Heart left ventricle (tissue), 16 donors: ENCODE measurements at regions of chr1 and their contacts with region 1.

Region 1: DNA sequence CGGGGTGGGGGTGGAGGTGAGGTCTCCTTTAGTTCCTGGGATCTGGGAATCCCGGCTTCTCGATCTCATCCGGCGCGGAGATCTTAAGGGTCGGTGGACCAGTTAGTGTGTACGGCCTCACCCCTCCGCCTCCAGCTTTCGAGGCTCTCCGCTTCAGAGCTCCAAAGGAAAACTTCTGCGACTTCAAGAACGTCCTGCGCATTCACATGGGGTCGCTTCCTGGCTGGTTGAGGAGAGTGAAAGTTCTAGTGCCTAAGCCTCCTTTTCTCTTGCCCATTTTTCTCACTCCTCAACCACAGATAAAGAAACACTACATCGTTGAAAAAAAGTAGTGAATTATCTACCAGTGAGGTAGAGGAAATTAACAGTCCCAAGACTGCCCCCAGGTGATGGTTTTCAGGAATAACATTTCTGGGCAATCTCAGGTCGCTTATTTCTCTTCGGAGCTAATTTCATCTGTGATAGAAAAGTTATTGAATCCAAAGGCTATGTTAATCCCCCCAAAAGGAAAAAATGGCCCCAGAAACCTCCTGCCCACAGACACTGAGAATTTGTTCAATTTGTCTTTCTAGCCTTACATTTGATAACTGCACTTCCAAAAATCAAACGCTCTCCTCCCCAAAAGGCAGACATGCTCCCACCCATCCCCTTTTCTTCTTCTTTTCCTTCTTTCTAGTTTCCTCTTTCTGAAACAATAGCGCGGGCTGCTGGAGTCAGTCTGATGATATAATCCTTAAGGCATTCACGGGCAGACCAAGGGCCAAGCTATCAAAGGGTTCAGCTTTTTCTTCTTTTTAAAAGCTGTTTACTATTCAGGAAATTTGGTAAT is 20.6 kb upstream of the TBX15 start:
- DNase-seq: no peak
- ATAC-seq: peak in 3 of 4 donors; percentile 44 to 85 (median 73)
- H3K4me3 ChIP-seq: peak overlapping the region; percentile 8 to 46 (median 32)
- H3K27ac ChIP-seq: no peak overlapping the region
- H3K4me1 ChIP-seq: peaks cover 0 to 32% (median 17%) of the 10 kb centered on the region in 12 donors
- H3K27me3 ChIP-seq: peaks cover 30 to 68% (median 53%) of the 10 kb centered on the region in 9 donors
- CTCF ChIP-seq: peak; percentile 48 to 73 (median 60)
- POLR2A ChIP-seq: no peak

Region 2: DNA sequence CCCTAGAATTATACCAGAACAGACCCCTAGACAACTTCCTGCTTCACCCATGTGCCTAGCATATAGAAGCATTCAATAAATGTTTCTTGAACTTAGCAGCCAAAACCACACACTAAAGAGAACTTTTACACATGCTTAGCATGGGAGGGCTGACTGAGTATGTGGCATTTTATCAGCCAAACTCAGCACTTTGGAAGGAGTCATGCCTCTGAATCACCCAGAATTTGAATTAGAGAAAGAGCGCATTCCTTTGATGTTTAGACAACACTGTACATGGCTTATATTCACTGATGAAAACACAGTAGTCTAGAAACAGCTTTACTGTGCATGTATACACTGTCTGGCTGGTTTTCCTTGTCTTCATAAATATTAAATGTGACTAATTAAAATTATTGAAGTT is 849.8 kb before region 1 on chr1:
- intact Hi-C with region 1: loop called in 8 of 10 experiments (anchors 5 to 10 kb)
- DNase-seq: no peak
- ATAC-seq: peak in 1 of 4 donors; percentile 29
- H3K4me3 ChIP-seq: no peak overlapping the region
- H3K27ac ChIP-seq: no peak overlapping the region
- H3K4me1 ChIP-seq: no peaks in the 10 kb centered on the region
- H3K27me3 ChIP-seq: peaks cover 0 to 3% (median 0%) of the 10 kb centered on the region in 9 donors
- CTCF ChIP-seq: no peak
- POLR2A ChIP-seq: no peak

Region 3: DNA sequence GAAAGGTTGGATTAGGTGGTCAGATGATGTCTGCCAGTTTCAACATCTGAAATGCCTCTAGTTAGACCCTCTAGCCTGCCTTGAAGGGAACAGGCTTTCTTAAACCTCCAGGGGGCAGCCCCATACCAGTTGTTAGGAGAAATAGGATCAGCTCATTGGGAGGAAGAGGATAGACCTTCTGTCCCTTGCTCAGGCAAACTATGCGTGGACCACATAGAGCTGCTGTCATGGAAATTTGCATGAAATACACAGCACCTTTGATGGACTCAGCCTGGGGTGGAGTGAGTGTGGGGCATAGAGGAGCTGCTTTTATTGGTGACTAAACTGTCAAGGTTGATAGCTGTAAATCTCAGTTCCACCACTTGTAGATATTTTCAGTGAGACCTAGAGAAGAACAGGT is 785.3 kb before region 1 on chr1:
- intact Hi-C with region 1: loop called in 8 of 10 experiments (anchors 2 to 10 kb)
- DNase-seq: peak in 1 of 5 donors; percentile 20
- ATAC-seq: peak in 2 of 4 donors; percentile 54 to 67
- H3K4me3 ChIP-seq: no peak overlapping the region
- H3K27ac ChIP-seq: no peak overlapping the region
- H3K4me1 ChIP-seq: no peaks in the 10 kb centered on the region
- H3K27me3 ChIP-seq: no peaks in the 10 kb centered on the region
- CTCF ChIP-seq: peak in 9 of 12 donors; percentile 28 to 52 (median 42)
- POLR2A ChIP-seq: no peak

Region 4: GRCh38 chr1:118304722-118305359 is 703.9 kb before region 1 on chr1:
- intact Hi-C with region 1: loop called in 2 of 10 experiments (anchors 10 kb)
- DNase-seq: no peak
- ATAC-seq: peak in 3 of 4 donors; percentile 45 to 66 (median 64)
- H3K4me3 ChIP-seq: no peak overlapping the region
- H3K27ac ChIP-seq: no peak overlapping the region
- H3K4me1 ChIP-seq: peaks cover 0 to 22% (median 8%) of the 10 kb centered on the region in 12 donors
- H3K27me3 ChIP-seq: no peaks in the 10 kb centered on the region
- CTCF ChIP-seq: peak in 11 of 12 donors; percentile 16 to 57 (median 41)
- POLR2A ChIP-seq: no peak

Region 5: GRCh38 chr1:118421868-118422350 is 586.8 kb before region 1 on chr1:
- intact Hi-C with region 1: no loop called
- DNase-seq: no peak
- ATAC-seq: no peak
- H3K4me3 ChIP-seq: no peak overlapping the region
- H3K27ac ChIP-seq: no peak overlapping the region
- H3K4me1 ChIP-seq: no peaks in the 10 kb centered on the region
- H3K27me3 ChIP-seq: no peaks in the 10 kb centered on the region
- CTCF ChIP-seq: no peak
- POLR2A ChIP-seq: no peak